ENCODE measurements at regions of chr1 and their contacts with region 1.

Region 1: DNA sequence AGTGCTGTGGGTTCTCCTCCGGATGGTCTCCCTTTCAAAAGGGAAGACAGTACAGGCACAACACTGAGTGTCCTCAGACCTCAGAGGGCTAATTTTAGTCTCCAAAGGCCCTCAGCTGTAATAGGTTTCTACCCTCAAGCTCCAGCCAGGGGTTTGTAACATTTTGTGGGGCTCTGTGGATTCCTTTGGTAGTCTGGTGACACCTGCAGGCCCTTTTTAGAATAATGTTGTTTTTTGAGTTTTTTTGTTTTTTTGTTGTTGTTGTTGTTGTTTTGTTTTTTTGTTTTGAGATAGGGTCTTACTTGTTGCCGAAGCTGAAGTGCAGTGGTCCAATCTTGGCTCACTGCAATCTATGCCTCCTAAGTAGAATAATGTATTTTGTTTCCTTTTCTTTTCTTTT is 15.0 kb upstream of the TMEM201 start:
- DNase-seq: no peak
- ATAC-seq: peak; percentile 43
- H3K4me3 Mint-ChIP-seq: no peak overlapping the region
- H3K27ac Mint-ChIP-seq: no peak overlapping the region
- H3K4me1 Mint-ChIP-seq: no peaks in the 10 kb centered on the region
- H3K27me3 Mint-ChIP-seq: no peaks in the 10 kb centered on the region
- CTCF ChIP-seq: 0 out of 2 replicates have a peak, but pooled peaks have one; percentile 17

Region 2: GRCh38 chr1:9482816-9483572 is 90.7 kb before region 1 on chr1:
- CTCF ChIA-PET with region 1: no interaction called
- POLR2A ChIA-PET with region 1: no interaction called
- DNase-seq: no peak
- ATAC-seq: no peak
- H3K4me3 Mint-ChIP-seq: no peak overlapping the region
- H3K27ac Mint-ChIP-seq: no peak overlapping the region
- H3K4me1 Mint-ChIP-seq: no peaks in the 10 kb centered on the region
- H3K27me3 Mint-ChIP-seq: no peaks in the 10 kb centered on the region
- CTCF ChIP-seq: no peak

Region 3: DNA sequence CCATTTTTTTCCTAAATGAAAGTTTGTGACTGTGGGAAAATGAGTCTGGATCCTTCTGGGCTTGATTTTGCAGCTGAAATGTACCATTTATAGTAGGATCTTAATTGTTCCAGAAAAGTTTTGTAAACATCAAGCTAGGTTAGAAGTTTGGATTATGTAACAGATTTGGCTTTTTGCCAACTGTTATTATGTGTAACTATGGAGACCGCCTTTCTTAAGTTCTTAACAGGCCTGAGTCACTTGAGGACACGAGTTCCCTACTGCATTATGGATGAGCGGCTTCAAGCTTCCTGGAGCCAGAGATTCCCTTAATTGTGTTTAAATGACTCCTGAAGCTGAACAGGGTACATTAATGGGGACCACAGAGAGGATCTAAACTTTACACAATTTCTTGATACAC is 12.3 kb before region 1 on chr1:
- CTCF ChIA-PET with region 1: interaction called, 3 read pairs
- POLR2A ChIA-PET with region 1: interaction called, 10 read pairs
- DNase-seq: no peak
- ATAC-seq: no peak
- H3K4me3 Mint-ChIP-seq: no peak overlapping the region
- H3K27ac Mint-ChIP-seq: no peak overlapping the region
- H3K4me1 Mint-ChIP-seq: no peaks in the 10 kb centered on the region
- H3K27me3 Mint-ChIP-seq: no peaks in the 10 kb centered on the region
- CTCF ChIP-seq: no peak

Region 4: DNA sequence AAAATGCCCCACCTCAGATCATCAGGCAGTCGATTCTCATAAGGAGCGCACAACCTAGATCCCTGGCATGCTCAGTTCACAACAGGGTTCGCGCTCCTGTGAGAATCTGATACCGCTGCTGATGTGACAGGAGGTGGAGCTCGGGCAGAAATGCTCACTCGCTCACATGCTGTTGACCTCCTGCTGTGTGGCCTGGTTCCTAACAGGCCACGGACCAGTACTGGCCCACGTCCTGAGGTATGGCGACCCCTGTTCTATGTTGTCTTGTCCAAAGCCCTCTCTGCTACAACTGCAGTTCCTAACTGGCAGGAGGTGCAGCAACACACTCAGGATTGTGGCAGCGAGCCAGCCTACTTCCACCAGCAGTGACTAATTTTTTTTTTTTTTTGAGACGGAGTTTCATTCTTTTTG is 179.4 kb after region 1 on chr1:
- CTCF ChIA-PET with region 1: no interaction called
- POLR2A ChIA-PET with region 1: no interaction called
- DNase-seq: no peak
- ATAC-seq: no peak
- H3K4me3 Mint-ChIP-seq: no peak overlapping the region
- H3K27ac Mint-ChIP-seq: no peak overlapping the region; the same call in 1 of the 2 replicates
- H3K4me1 Mint-ChIP-seq: peaks cover 23% of the 10 kb centered on the region
- H3K27me3 Mint-ChIP-seq: no peaks in the 10 kb centered on the region
- CTCF ChIP-seq: no peak

Measured in WTC11 (cell line).